ENCODE measurements at regions of chr1 and their contacts with region 1.

Region 1: DNA sequence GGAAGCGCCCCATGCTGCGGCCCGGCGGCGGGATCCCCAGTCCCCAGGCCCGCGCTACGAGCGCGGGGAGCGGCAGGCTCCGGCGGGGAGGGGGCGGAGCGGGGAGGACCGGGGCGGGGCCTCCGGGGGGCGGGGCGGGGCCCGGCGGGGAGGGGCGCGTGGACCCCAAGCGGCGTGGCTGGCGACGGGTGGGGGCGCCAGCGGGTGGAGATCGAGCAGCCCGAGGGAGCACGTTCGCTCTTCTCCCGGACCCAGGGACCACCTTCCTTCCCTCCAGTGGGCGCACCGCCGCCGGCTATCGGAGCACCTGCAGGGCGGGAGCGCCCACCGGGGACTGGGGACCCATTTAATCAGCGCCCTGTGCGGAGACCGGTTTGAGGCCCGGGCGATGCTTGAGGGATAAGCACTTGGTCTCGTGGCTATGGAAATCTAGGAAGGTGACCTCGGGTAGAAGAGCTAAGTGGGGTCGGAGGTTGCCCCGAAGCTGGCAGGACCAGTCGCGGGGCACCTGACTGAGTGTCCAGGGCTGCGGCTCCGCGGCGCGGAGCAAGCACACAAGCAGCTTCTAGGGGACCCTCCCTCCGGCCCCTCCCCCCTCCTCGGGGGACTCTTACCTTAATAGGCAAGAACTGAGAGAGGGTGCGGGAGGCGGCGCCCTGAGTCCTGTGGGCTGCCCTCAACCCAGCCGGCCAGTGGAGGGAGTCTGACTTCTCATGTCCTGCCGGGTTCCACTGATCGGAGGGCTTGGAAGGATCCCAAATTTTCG is at the start of gene TSPAN2:
- DNase-seq: no peak
- ATAC-seq: peak; percentile 79
- H3K4me3 ChIP-seq: no peak within 1 kb of the TSS
- H3K27ac ChIP-seq: no peak within 1 kb of the TSS
- H3K4me1 ChIP-seq: no peaks in the 10 kb centered on the region
- H3K27me3 ChIP-seq: peaks cover 5 to 13% of the 10 kb centered on the region in 2 experiments
- CTCF ChIP-seq: no peak; a peak in 1 of 6 replicates
- EP300 ChIP-seq: no peak
- POLR2A ChIP-seq: no peak
- RAD21 ChIP-seq: no peak
- polyA plus RNA-seq, gene TSPAN2: not detected

Region 2: DNA sequence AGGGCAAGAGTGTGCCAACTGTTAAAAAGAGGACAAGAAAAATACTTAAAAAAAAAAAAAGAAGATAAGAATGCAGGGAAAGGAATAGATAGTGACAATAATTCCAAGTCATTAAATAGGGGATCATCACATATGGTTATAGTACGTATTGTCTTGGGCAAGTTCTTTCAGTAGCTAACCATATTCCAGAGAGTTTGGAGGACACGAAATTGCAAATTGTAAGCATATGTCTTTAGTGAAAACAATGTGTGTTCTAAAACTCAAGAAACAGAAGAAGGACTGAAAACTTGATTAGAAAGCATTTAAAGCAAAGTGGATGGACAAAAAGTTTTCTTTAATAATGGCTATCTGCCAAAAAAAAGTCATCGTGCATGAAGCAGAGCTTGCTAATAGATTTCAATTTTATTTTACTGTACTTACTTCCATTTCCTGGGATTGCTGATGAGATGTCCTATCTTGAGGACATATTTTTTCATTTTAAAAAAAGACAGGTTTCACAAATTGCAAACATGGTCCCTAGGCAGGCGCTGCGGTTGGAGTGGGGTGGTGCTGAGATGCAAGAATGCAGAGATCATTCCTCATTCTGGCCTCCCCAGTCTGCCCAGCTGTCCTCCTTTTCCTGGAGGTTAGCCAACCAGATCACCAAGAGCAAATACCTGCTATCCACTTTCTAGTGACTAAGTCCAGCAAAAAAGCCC is 12.2 kb before region 1 on chr1:
- CTCF ChIA-PET with region 1: interaction called, 11 read pairs
- POLR2A ChIA-PET with region 1: interaction called, 7 read pairs
- RAD21 ChIA-PET with region 1: interaction called, 9 read pairs
- SMC1A ChIA-PET with region 1: interaction called, 77 read pairs
- in situ Hi-C with region 1: no loop called
- intact Hi-C with region 1: no loop called
- DNase-seq: no peak
- ATAC-seq: no peak
- H3K4me3 ChIP-seq: no peak overlapping the region
- H3K27ac ChIP-seq: no peak overlapping the region
- H3K4me1 ChIP-seq: no peaks in the 10 kb centered on the region
- H3K27me3 ChIP-seq: no peaks in the 10 kb centered on the region; a peak in 1 of 4 replicates
- CTCF ChIP-seq: no peak
- EP300 ChIP-seq: no peak
- POLR2A ChIP-seq: no peak
- RAD21 ChIP-seq: no peak

Region 3: DNA sequence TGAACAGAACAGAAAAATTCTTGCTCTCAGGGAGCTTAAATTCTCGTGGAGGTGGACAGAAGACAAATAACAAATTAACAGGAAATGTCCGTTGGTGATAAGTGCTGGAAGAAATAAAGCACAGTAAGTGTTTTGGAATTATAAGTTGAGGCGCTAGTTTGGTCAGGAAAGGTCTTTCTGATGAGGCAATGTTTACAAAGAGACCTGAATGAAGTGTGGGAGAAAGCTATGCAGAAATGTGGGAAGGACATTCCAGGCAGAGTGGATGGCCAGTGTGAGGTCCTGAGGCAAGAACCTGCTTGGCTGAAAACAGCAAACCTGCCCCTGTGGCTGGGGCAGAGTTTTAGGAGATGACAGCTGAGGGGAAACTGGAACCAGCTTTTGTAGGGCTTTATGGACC is 225.2 kb after region 1 on chr1:
- CTCF ChIA-PET with region 1: no interaction called
- POLR2A ChIA-PET with region 1: no interaction called
- RAD21 ChIA-PET with region 1: no interaction called
- SMC1A ChIA-PET with region 1: no interaction called
- in situ Hi-C with region 1: no loop called
- intact Hi-C with region 1: no loop called
- DNase-seq: no peak
- ATAC-seq: no peak
- H3K4me3 ChIP-seq: no peak overlapping the region
- H3K27ac ChIP-seq: no peak overlapping the region
- H3K4me1 ChIP-seq: peaks cover 3% of the 10 kb centered on the region; the same call in 1 of the 2 replicates
- H3K27me3 ChIP-seq: no peaks in the 10 kb centered on the region; a peak in 1 of 4 replicates
- CTCF ChIP-seq: no peak
- EP300 ChIP-seq: no peak
- POLR2A ChIP-seq: no peak
- RAD21 ChIP-seq: no peak

Measured in GM12878 (cell line).